B cell (primary cell): ENCODE measurements at regions of chr3 and their contacts with region 1.

Region 1: GRCh38 chr3:50245831-50246516 is 10.0 kb downstream of the GNAI2 start:
- DNase-seq: peak; percentile 92
- ATAC-seq: peak; percentile 66
- H3K4me3 ChIP-seq: peak overlapping the region in 4 of 5 experiments; percentile 37 to 50 (median 40)
- H3K4me3 Mint-ChIP-seq: peak overlapping the region; percentile 82
- H3K27ac ChIP-seq: peak overlapping the region; percentile 76 to 86
- H3K27ac Mint-ChIP-seq: peak overlapping the region; percentile 89
- H3K4me1 ChIP-seq: peaks cover 66 to 94% of the 10 kb centered on the region in 2 donors
- H3K4me1 Mint-ChIP-seq: peaks cover 82% of the 10 kb centered on the region
- H3K27me3 ChIP-seq: no peaks in the 10 kb centered on the region
- H3K27me3 Mint-ChIP-seq: no peaks in the 10 kb centered on the region
- CTCF ChIP-seq: peak; percentile 96

Region 2: GRCh38 chr3:50121416-50122032 is 124.5 kb before region 1 on chr3:
- CTCF ChIA-PET with region 1: interaction called, 12 read pairs
- POLR2A ChIA-PET with region 1: no interaction called
- intact Hi-C with region 1: no loop called
- DNase-seq: peak; percentile 82
- ATAC-seq: peak; percentile 80
- H3K4me3 ChIP-seq: no peak overlapping the region
- H3K4me3 Mint-ChIP-seq: no peak overlapping the region
- H3K27ac ChIP-seq: no peak overlapping the region
- H3K27ac Mint-ChIP-seq: no peak overlapping the region
- H3K4me1 ChIP-seq: no peaks in the 10 kb centered on the region
- H3K4me1 Mint-ChIP-seq: peaks cover 2% of the 10 kb centered on the region
- H3K27me3 ChIP-seq: peaks cover 0 to 2% (median 0%) of the 10 kb centered on the region in 4 experiments
- H3K27me3 Mint-ChIP-seq: no peaks in the 10 kb centered on the region
- CTCF ChIP-seq: peak; percentile 91

Region 3: GRCh38 chr3:50260027-50260941 is 14.3 kb after region 1 on chr3:
- CTCF ChIA-PET with region 1: interaction called, 596 read pairs
- POLR2A ChIA-PET with region 1: interaction called, 10 read pairs
- intact Hi-C with region 1: loop called (anchors 1 kb)
- DNase-seq: peak; percentile 90
- ATAC-seq: peak; percentile 93
- H3K4me3 ChIP-seq: peak overlapping the region in 4 of 5 experiments; percentile 48 to 58 (median 54)
- H3K4me3 Mint-ChIP-seq: peak overlapping the region; percentile 77
- H3K27ac ChIP-seq: peak overlapping the region; percentile 44 to 79
- H3K27ac Mint-ChIP-seq: peak overlapping the region; percentile 80
- H3K4me1 ChIP-seq: peaks cover 12 to 17% of the 10 kb centered on the region in 2 donors
- H3K4me1 Mint-ChIP-seq: peaks cover 12% of the 10 kb centered on the region
- H3K27me3 ChIP-seq: peaks cover 0 to 5% (median 0%) of the 10 kb centered on the region in 4 experiments
- H3K27me3 Mint-ChIP-seq: no peaks in the 10 kb centered on the region
- CTCF ChIP-seq: peak; percentile 93

Region 4: DNA sequence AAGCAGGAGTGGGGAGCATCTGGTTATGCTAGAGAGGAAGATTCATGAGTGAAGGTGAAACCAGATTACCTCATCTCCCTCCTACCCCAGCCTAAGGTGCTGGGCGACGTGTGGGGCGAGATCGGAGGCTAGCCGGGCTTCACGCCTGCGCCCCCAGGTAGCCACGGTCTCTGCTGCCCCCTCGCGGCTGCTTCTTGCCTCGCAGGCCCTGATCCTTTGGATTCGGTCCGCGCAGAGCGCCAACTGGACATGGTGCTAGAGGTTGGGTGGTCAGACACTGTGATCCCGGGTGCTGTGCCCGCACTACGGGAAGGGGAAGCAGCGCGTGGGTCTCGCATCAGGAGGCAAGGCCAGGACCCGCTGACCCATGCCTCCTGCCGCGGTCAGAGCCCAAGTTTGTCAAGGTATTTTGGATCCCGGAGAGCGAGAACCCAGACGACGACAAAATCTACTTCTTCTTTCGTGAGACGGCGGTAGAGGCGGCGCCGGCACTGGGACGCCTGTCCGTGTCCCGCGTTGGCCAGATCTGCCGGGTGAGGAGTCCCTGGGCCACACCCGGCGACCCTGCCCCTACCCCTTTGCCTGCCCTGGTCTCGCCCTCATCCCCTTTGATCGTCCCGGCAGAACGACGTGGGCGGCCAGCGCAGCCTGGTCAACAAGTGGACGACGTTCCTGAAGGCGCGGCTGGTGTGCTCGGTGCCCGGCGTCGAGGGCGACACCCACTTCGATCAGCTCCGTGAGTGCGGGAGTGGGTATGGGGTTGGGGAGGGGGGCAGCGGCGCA is 27.1 kb after region 1 on chr3:
- CTCF ChIA-PET with region 1: interaction called, 12 read pairs
- POLR2A ChIA-PET with region 1: no interaction called
- intact Hi-C with region 1: loop called (anchors 2 kb)
- DNase-seq: peak; percentile 91
- ATAC-seq: peak; percentile 98
- H3K4me3 ChIP-seq: peak overlapping the region in 3 of 5 experiments; percentile 8 to 48 (median 30)
- H3K4me3 Mint-ChIP-seq: peak overlapping the region; percentile 82
- H3K27ac ChIP-seq: no peak overlapping the region
- H3K27ac Mint-ChIP-seq: peak overlapping the region; percentile 81
- H3K4me1 ChIP-seq: peaks cover 33 to 39% of the 10 kb centered on the region in 2 donors
- H3K4me1 Mint-ChIP-seq: peaks cover 26% of the 10 kb centered on the region
- H3K27me3 ChIP-seq: peaks cover 0 to 53% (median 21%) of the 10 kb centered on the region in 4 experiments
- H3K27me3 Mint-ChIP-seq: peaks cover 36% of the 10 kb centered on the region
- CTCF ChIP-seq: peak; percentile 97

Region 5: DNA sequence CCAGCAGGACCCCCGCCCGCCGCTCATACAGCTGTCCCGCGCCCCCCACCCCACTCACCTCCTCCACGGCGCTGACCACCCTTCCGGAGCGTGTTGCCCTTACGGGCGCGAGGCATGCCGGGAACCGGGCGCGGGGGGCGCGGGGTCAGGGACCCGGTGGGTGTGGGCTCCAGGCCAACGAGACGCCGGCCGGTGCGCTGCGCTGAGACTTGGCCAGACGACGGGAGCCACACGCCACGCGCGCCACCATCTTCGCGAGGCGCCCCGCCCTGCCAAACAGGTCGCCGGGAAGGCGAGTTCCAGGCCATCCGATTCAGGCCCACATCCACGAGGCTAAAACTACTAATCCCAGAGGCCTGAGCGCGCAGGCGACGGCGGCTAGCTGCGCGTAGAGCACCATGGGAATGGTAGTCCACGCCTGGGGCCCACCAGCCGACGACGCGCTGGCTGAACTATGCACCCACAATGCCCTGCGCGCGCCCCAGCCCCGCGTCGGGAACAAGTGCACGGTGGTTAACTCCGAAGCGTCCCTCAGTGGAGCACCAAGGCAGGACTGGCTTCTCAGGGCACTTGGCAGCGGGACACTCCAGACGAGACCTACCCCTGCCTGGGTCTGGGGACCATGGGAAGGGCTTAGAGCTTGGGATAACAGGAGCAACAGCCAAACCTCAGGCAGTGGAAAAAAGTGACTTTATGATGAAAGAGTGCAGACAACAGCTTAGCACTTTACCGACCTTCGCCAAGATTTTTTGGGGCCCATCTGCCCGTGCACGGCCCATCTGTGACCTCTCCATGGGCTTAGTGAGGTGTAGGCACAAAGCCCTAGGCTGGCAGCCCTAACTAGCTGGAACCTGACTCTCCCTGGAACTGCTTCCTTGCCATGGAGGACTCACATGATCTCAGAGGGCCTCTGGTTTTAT is 46.4 kb after region 1 on chr3 and contains the start of gene IFRD2:
- CTCF ChIA-PET with region 1: interaction called, 6 read pairs
- POLR2A ChIA-PET with region 1: no interaction called
- intact Hi-C with region 1: loop called (anchors 1 kb)
- DNase-seq: peak; percentile 97
- ATAC-seq: peak; percentile 99
- H3K4me3 ChIP-seq: peak within 1 kb of the TSS; percentile 56 to 94 (median 81)
- H3K4me3 Mint-ChIP-seq: peak within 1 kb of the TSS; percentile 92
- H3K27ac ChIP-seq: peak within 1 kb of the TSS; percentile 57 to 85
- H3K27ac Mint-ChIP-seq: peak within 1 kb of the TSS; percentile 96
- H3K4me1 ChIP-seq: peaks cover 11 to 17% of the 10 kb centered on the region in 2 donors
- H3K4me1 Mint-ChIP-seq: peaks cover 17% of the 10 kb centered on the region
- H3K27me3 ChIP-seq: no peaks in the 10 kb centered on the region
- H3K27me3 Mint-ChIP-seq: no peaks in the 10 kb centered on the region
- CTCF ChIP-seq: no peak
- total RNA-seq, gene IFRD2: 55.8 and 63.4 TPM in 2 replicates